Posterior vena cava (tissue), 2 donors: ENCODE measurements at regions of chr11 and their contacts with region 1.

Region 1: DNA sequence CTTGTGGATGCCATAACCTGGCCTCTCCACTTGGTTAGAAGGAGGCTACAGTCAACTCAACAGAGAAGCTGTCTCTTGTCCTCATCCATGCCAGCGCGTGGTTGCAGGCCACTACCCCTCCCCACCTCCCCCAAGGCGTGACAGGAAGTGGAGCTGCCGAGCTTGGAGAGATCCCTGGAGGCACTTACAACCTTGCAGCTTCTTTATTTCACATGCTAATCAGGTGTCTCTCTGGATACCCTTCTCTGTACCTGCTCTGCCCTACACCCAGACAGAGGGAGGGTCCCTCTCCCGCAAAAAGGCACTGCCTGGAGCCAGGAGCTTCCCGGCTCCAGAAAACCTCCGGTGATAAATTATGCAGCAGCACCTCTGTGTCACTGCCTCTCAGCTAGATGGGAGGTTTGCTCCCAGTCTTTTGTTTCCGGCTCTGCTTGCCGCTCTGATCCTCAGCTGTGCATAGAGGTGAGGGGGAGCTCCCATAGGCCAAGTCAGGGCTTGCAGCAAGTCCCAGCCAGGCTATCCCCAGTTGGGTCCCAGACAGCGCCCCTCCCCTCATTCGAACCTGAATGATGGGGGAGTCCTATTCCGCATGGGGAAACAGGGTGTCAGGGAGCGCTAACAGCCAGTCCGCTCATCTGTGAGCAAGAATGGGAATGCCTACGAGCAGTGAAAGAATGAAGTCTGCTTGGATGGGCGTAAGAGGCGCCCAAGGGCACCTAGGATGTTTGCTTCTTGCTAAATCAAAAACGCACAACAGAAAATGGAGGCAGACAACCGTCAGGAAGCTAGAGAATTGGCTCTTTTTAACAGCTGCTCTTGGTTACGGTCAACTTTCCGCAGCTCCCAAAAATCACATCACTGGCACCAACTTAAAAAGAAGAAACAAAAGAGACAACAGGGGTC is 5.6 kb downstream of the LRP4 start:
- DNase-seq: no peak

Region 2: GRCh38 chr11:46055371-46055770 is 857.4 kb before region 1 on chr11:
- intact Hi-C with region 1: no loop called
- DNase-seq: no peak

Region 3: GRCh38 chr11:46987183-46987582 is 74.4 kb after region 1 on chr11:
- intact Hi-C with region 1: no loop called
- DNase-seq: no peak

Region 4: GRCh38 chr11:47056261-47056915 is 143.6 kb after region 1 on chr11:
- intact Hi-C with region 1: loop called in 1 of 2 experiments (anchors 5 kb)
- DNase-seq: no peak